ENCODE measurements at regions of chr14 and their contacts with region 1.

Region 1: DNA sequence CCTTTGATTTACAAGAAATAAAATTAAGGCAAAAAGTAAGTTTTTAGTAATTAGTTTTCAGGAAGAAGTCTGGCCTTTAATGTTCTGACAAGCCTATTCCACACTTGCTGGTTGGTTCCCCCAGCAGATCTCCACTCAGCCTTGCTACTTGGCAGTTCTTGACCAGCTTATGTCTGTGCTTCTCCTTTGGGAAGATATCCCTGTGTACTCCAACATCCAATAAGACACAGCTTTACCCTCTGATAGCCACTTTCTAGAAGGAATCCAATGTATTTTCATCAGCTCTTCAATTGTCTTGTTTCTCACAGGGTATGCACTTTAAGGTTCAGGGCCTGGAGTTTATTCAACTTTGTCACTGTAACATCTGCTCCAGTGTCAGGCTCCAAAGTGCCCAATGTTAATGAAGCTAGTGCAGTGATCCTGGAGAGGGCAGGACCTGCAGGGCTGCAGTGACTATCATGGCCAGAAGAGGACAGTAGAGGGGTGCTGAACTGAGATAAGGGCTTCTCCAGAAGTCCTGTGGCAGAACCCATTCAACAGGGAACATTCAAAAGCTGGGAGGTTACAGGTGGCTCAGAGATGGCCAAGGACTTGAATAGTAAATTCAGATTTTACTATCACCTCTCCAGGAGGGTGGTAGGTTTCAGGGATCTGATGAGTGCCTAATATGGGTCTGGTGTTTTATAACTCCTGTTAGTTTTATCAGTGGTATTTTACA is 22.9 kb downstream of the JKAMP start:
- DNase-seq: peak; percentile 57
- H3K4me3 ChIP-seq: peak overlapping the region in 1 of 2 experiments; percentile 27; a peak in 1 of 4 replicates
- H3K27ac ChIP-seq: no peak overlapping the region
- H3K4me1 ChIP-seq: peaks cover 0 to 1% of the 10 kb centered on the region in 2 experiments; a peak in 1 of 4 replicates
- H3K27me3 ChIP-seq: no peaks in the 10 kb centered on the region; the same call in 1 of the 2 replicates
- CTCF ChIP-seq: peak; percentile 72
- EP300 ChIP-seq: no peak
- RAD21 ChIP-seq: peak; percentile 84

Region 2: DNA sequence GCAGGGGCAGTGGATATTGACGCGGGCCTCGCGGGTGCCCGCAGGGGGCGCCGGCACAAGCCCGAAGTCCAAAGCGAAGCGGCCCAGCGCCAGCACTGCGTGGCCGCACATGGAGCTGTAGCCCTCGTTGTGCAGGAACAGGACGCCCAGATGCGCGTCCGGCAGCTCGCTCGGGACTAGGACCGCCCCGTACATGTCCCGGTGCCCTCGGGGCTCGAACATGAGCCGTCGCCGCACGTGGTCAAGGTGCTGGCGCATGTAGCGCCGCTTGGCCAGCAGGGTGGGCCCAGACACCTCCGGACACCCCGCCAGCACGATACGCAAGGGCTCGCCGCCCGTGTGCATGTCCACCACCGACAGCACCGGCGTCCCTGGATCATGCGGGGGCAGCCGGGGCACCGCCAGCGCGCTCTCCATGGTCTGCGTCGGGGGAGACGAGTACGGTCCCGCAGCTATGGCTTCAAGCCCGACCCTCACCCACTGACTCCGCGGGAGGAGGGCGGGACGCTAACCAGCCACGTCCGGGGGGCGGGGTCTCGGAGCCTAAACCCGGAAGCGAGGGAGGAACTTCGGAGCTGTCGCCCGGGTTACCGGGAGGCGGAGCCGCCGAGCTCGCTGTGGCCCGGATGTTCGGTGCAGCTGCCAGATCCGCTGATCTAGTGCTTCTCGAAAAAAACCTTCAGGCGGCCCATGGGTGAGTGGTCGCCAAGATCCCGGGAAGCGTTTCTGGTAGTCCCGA is 23.2 kb before region 1 on chr14 and contains the starts of genes JKAMP and L3HYPDH:
- CTCF ChIA-PET with region 1: interaction called, 16 read pairs
- POLR2A ChIA-PET with region 1: no interaction called
- DNase-seq: peak; percentile 98
- H3K4me3 ChIP-seq: peak within 1 kb of the TSS; percentile 68 to 89
- H3K27ac ChIP-seq: peak within 1 kb of the TSS; percentile 97 to 99
- H3K4me1 ChIP-seq: peaks cover 12 to 26% of the 10 kb centered on the region in 2 experiments; a peak in 3 of 4 replicates
- H3K27me3 ChIP-seq: no peaks in the 10 kb centered on the region
- CTCF ChIP-seq: peak; percentile 67
- EP300 ChIP-seq: no peak; a peak in 2 of 4 replicates
- RAD21 ChIP-seq: no peak
- polyA plus RNA-seq, gene JKAMP: 95.4 and 146 TPM in 2 replicates
- polyA plus RNA-seq, gene L3HYPDH: 66.2 and 120 TPM in 2 replicates

Region 3: GRCh38 chr14:59520224-59520623 is 13.0 kb after region 1 on chr14:
- CTCF ChIA-PET with region 1: interaction called, 11 read pairs
- POLR2A ChIA-PET with region 1: no interaction called
- DNase-seq: no peak
- H3K4me3 ChIP-seq: no peak overlapping the region
- H3K27ac ChIP-seq: no peak overlapping the region
- H3K4me1 ChIP-seq: no peaks in the 10 kb centered on the region
- H3K27me3 ChIP-seq: no peaks in the 10 kb centered on the region
- CTCF ChIP-seq: no peak
- EP300 ChIP-seq: no peak
- RAD21 ChIP-seq: no peak

Region 4: DNA sequence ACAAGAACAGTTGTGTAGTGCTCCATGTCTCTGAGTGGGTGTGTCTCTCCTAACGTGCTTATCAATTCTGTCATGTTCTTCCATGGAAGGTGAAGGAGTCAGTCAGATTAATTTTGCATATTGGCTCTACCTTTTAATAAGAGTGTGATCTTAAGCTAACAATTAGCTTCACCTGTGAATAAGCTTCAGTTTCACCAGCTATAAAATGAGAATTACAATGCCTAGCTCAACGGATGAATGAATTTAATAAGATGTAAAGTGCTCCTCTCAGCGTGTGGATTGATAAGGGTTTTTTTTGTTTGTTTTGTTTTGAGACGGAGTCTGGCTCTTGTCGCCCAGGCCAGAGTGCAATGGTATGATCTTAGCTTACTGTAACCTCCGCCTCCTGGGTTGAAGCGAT is 36.7 kb after region 1 on chr14:
- CTCF ChIA-PET with region 1: interaction called, 14 read pairs
- POLR2A ChIA-PET with region 1: no interaction called
- DNase-seq: no peak
- H3K4me3 ChIP-seq: no peak overlapping the region
- H3K27ac ChIP-seq: no peak overlapping the region
- H3K4me1 ChIP-seq: no peaks in the 10 kb centered on the region; a peak in 1 of 4 replicates
- H3K27me3 ChIP-seq: no peaks in the 10 kb centered on the region; the same call in 1 of the 2 replicates
- CTCF ChIP-seq: no peak
- EP300 ChIP-seq: no peak
- RAD21 ChIP-seq: no peak

Region 5: GRCh38 chr14:59688224-59689170 is 181.3 kb after region 1 on chr14:
- CTCF ChIA-PET with region 1: interaction called, 11 read pairs
- POLR2A ChIA-PET with region 1: no interaction called
- DNase-seq: peak; percentile 38
- H3K4me3 ChIP-seq: no peak overlapping the region
- H3K27ac ChIP-seq: no peak overlapping the region
- H3K4me1 ChIP-seq: no peaks in the 10 kb centered on the region
- H3K27me3 ChIP-seq: no peaks in the 10 kb centered on the region
- CTCF ChIP-seq: peak; percentile 63
- EP300 ChIP-seq: no peak
- RAD21 ChIP-seq: peak; percentile 62

Measured in SK-N-SH (cell line).